H1 (cell line): ENCODE measurements at regions of chr10 and their contacts with region 1.

Region 1: GRCh38 chr10:5623081-5623748 is 43.2 kb downstream of the ASB13 start:
- DNase-seq: peak; percentile 73 to 98
- H3K4me3 ChIP-seq: no peak overlapping the region
- H3K27ac ChIP-seq: no peak overlapping the region
- H3K4me1 ChIP-seq: no peaks in the 10 kb centered on the region; a peak in 1 of 7 replicates
- H3K27me3 ChIP-seq: no peaks in the 10 kb centered on the region
- CTCF ChIP-seq: peak; percentile 95 to 96 (median 96)
- EP300 ChIP-seq: no peak
- POLR2A ChIP-seq: no peak
- RAD21 ChIP-seq: peak; percentile 97 to 98

Region 2: DNA sequence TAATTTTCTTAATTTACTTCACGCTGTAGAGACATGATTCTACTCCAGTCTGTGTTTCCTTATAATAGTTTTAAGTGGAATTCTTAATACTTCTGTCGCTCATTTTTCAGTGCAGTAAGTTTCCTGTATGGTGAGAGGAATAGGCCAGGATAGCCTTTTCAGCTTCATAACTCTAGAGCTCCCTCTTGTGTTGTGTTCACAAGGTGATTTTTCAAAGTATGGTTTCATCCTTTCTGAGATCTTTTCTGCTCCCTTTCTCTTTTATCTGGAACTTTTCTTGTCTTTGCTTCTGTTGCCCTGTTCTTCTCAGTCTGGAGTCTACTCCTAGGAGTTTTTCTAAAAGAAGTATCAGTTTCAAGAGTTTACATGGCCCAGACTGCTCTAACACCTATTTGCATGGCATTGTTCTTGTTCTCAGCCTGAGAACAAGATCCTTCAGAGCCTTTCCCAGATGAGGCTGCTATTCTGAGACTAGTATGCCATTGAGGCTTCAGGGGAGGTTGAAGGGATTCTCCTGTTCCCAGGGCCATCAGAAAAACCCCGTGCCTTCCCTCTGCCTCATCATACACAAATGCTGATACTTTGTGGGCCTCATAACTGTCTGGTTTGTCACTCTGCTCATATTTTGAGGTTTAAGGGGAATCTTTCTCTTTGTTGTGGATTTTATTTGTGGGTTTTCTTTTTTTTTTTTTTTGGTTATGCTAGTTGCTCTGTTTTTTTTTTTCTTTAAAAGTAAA is 189.0 kb before region 1 on chr10:
- CTCF ChIA-PET with region 1: interaction called, 200 read pairs
- POLR2A ChIA-PET with region 1: no interaction called
- DNase-seq: no peak
- H3K4me3 ChIP-seq: no peak overlapping the region
- H3K27ac ChIP-seq: no peak overlapping the region
- H3K4me1 ChIP-seq: peaks cover 0 to 3% (median 0%) of the 10 kb centered on the region in 4 experiments; a peak in 1 of 7 replicates
- H3K27me3 ChIP-seq: no peaks in the 10 kb centered on the region
- CTCF ChIP-seq: peak in 2 of 3 experiments; percentile 51 to 69; a peak in 2 of 4 replicates
- EP300 ChIP-seq: no peak
- POLR2A ChIP-seq: no peak
- RAD21 ChIP-seq: peak; percentile 73 to 75

Region 3: GRCh38 chr10:5456563-5456962 is 166.7 kb before region 1 on chr10:
- CTCF ChIA-PET with region 1: interaction called, 25 read pairs
- POLR2A ChIA-PET with region 1: no interaction called
- DNase-seq: no peak
- H3K4me3 ChIP-seq: no peak overlapping the region
- H3K27ac ChIP-seq: no peak overlapping the region
- H3K4me1 ChIP-seq: no peaks in the 10 kb centered on the region
- H3K27me3 ChIP-seq: no peaks in the 10 kb centered on the region
- CTCF ChIP-seq: no peak
- EP300 ChIP-seq: no peak
- POLR2A ChIP-seq: no peak
- RAD21 ChIP-seq: no peak

Region 4: DNA sequence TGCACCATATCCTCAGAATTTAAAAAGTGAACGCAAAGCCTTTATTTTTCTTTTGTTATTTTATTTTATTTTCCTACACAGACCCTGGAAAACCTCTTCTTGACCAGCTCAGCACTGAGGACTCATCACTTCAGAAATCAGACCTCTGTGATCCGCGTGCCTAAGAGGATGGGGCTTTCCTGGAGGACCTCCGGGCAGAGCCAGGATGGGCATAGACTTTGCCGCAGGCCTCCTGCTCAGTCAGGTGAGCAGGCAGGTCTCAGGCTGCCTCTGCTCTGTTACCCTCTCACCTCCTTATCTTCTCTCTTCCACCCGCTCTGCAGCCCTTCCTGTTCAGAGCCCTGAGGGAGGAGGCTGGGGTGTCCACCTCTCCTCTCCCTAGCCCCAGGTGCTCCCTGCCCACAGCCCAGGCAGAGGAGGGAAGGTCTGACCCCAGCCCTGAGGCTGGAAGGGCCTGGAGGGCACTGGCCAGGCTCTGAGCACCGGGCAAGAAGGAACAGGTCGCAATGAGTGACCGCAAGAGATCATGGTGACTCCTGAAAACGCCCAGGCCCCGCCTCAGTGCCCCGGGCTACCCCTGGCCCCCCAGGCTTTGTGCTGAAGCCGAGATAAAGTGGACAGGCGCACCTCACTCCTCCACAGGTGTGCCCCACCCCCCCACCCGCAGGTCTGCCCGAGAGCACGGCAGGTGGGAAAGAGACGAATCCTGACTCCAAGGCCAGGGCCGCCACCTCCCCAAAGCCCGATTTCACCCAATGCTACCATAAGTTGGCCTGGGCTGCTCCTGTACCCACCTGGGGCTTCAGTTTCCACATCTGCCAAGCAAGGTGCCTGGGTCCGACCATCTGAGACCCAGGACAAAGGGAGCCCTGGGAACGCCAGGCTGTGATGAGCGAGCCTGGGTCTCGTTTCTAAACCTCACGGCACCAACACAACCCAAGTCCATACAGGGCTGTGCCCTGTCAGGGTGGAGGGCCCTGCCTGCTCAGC is 126.7 kb before region 1 on chr10:
- CTCF ChIA-PET with region 1: interaction called, 28 read pairs
- POLR2A ChIA-PET with region 1: no interaction called
- DNase-seq: no peak
- H3K4me3 ChIP-seq: no peak overlapping the region
- H3K27ac ChIP-seq: no peak overlapping the region
- H3K4me1 ChIP-seq: peaks cover 0 to 3% (median 0%) of the 10 kb centered on the region in 4 experiments; a peak in 1 of 7 replicates
- H3K27me3 ChIP-seq: no peaks in the 10 kb centered on the region
- CTCF ChIP-seq: no peak
- EP300 ChIP-seq: no peak
- POLR2A ChIP-seq: no peak
- RAD21 ChIP-seq: no peak

Region 5: GRCh38 chr10:5583525-5584175 is 39.6 kb before region 1 on chr10:
- CTCF ChIA-PET with region 1: interaction called, 27 read pairs
- POLR2A ChIA-PET with region 1: no interaction called
- DNase-seq: peak in 1 of 2 experiments; percentile 67
- H3K4me3 ChIP-seq: no peak overlapping the region; a peak in 1 of 8 replicates
- H3K27ac ChIP-seq: no peak overlapping the region
- H3K4me1 ChIP-seq: peaks cover 0 to 21% (median 13%) of the 10 kb centered on the region in 4 experiments; a peak in 6 of 7 replicates
- H3K27me3 ChIP-seq: no peaks in the 10 kb centered on the region; a peak in 2 of 7 replicates
- CTCF ChIP-seq: no peak
- EP300 ChIP-seq: no peak
- POLR2A ChIP-seq: no peak
- RAD21 ChIP-seq: no peak

Region 6: DNA sequence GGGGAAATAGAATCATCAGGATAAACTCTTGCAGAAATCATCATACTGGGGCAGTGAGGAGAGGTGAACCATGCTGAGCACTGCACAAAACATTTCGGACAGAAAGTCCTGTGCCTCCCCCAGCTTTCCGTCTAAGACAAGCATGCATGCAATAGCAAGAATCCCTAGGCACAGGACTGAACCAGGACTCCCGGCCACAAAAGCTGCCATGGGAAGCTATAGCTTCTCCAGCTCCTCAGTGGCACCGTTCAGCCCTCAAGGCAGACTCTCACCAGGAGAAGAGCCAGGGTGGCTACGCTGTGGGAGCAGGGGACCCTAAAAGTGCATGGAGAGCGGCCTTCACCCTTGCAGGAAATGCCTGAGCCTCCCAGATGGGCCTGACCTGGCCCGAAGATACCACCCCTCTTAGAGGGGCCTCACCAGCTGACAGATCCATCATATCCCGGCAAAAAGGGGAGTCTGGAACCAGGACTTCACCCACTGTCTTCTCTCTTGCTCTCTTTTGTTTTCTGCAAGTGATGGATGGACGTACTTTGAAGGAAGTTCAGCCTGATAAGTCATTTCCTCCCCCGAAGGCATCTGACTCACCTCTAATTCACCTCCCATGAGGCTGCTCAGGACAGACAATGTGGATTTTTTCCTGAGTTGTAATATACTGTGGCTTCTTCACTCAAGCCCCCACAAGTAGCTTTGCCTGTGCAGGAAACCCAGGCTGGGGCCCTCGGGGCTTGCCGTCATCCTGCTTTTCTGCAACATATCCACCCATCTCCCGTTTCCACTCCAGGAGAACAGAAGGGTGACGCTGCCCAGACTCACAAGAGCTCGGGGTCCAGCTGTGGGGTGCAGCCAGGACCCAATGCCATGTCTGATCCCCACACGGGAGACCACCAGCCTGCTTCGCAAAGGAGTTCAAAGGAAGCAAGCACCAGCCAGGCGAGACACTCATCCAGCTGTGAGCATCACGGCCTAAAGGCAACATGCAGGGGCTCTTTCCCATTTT is 27.3 kb before region 1 on chr10:
- CTCF ChIA-PET with region 1: interaction called, 45 read pairs
- POLR2A ChIA-PET with region 1: no interaction called
- DNase-seq: no peak
- H3K4me3 ChIP-seq: no peak overlapping the region
- H3K27ac ChIP-seq: no peak overlapping the region
- H3K4me1 ChIP-seq: peaks cover 1 to 7% (median 4%) of the 10 kb centered on the region in 4 experiments; a peak in 5 of 7 replicates
- H3K27me3 ChIP-seq: no peaks in the 10 kb centered on the region
- CTCF ChIP-seq: no peak
- EP300 ChIP-seq: no peak
- POLR2A ChIP-seq: no peak
- RAD21 ChIP-seq: no peak

Region 7: DNA sequence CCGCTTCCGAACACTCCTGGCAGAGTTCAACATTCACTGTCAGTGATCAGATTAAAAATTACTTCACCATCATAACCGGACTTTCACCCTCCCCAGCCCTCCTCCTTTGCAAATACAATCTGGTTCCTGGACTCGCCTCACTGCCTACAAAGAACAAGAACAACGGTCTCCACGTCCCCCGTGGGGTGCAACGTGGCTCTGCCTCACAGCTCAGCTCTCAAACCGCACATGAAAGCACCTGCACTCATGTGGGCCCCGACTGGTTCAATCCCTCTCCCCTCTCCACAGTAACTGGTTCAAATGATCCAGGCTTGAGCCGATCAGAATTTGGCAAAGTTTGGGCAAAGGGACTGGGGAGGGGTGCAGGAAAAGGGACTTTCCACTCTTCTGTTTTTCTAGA is 22.2 kb after region 1 on chr10:
- CTCF ChIA-PET with region 1: interaction called, 11 read pairs
- POLR2A ChIA-PET with region 1: no interaction called
- DNase-seq: no peak
- H3K4me3 ChIP-seq: no peak overlapping the region
- H3K27ac ChIP-seq: no peak overlapping the region
- H3K4me1 ChIP-seq: no peaks in the 10 kb centered on the region; a peak in 1 of 7 replicates
- H3K27me3 ChIP-seq: no peaks in the 10 kb centered on the region
- CTCF ChIP-seq: no peak
- EP300 ChIP-seq: no peak
- POLR2A ChIP-seq: no peak
- RAD21 ChIP-seq: no peak

Region 8: GRCh38 chr10:5710859-5711258 is 87.6 kb after region 1 on chr10:
- CTCF ChIA-PET with region 1: no interaction called
- POLR2A ChIA-PET with region 1: no interaction called
- DNase-seq: no peak
- H3K4me3 ChIP-seq: no peak overlapping the region
- H3K27ac ChIP-seq: no peak overlapping the region
- H3K4me1 ChIP-seq: no peaks in the 10 kb centered on the region
- H3K27me3 ChIP-seq: no peaks in the 10 kb centered on the region
- CTCF ChIP-seq: no peak
- EP300 ChIP-seq: no peak
- POLR2A ChIP-seq: no peak
- RAD21 ChIP-seq: no peak